PC-9 (cell line): ENCODE measurements at regions of chr7 and their contacts with region 1.

Region 1: GRCh38 chr7:29564496-29565223 is 1.0 kb downstream of the PRR15 start:
- DNase-seq: peak; percentile 96 to 98
- H3K4me3 ChIP-seq: peak overlapping the region; percentile 72
- H3K27ac ChIP-seq: peak overlapping the region; percentile 92
- H3K4me1 ChIP-seq: peaks cover 52% of the 10 kb centered on the region
- H3K27me3 ChIP-seq: no peaks in the 10 kb centered on the region
- CTCF ChIP-seq: 0 out of 2 replicates have a peak, but pooled peaks have one; percentile 17

Region 2: DNA sequence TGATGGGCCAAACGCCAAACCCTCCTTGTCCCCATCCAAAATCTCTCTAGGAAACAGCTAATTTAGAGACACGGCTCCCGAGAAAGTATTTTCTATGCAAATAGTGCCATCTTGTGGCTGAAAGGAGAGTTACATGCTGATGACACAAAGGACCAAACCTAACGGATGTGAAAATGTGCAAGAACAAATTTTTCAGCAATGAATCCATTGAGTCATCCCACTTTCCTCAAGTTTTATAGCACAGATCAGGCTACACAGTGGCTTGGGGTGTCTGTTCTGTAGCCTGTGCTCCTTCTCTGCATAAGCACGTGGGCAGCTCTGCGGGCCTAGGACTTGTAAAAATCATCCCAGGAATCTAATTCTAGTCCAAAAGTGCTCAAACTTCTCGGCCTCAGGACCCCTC is 155.8 kb before region 1 on chr7:
- CTCF ChIA-PET with region 1: no interaction called
- POLR2A ChIA-PET with region 1: no interaction called
- intact Hi-C with region 1: loop called (anchors 2 kb)
- DNase-seq: peak; percentile 55 to 77
- H3K4me3 ChIP-seq: no peak overlapping the region
- H3K27ac ChIP-seq: no peak overlapping the region
- H3K4me1 ChIP-seq: peaks cover 19% of the 10 kb centered on the region
- H3K27me3 ChIP-seq: peaks cover 4% of the 10 kb centered on the region; the same call in 1 of the 2 replicates
- CTCF ChIP-seq: peak; percentile 99

Region 3: DNA sequence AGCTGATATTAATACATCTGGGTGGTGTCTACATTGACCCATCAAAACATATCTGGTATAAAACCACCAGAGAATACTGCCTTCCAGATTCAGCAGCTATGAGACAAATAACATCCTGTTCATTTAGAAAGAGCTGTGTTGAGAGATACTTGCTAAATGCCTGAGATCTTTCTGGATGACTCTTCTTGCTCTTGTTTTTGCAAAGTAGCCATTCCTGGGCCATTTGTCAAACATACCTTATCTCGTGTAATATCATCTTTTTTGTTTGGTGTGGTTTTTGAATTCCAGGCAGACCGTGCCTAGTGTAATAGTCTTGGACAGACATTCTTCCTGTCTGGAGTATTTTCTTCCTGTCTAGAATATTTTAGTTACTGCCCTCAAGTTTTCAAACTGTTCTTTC is 75.7 kb before region 1 on chr7:
- CTCF ChIA-PET with region 1: no interaction called
- POLR2A ChIA-PET with region 1: interaction called, 20 read pairs
- intact Hi-C with region 1: loop called (anchors 1 kb)
- DNase-seq: peak; percentile 40 to 82
- H3K4me3 ChIP-seq: no peak overlapping the region
- H3K27ac ChIP-seq: peak overlapping the region; percentile 28
- H3K4me1 ChIP-seq: peaks cover 23% of the 10 kb centered on the region
- H3K27me3 ChIP-seq: no peaks in the 10 kb centered on the region
- CTCF ChIP-seq: no peak

Region 4: DNA sequence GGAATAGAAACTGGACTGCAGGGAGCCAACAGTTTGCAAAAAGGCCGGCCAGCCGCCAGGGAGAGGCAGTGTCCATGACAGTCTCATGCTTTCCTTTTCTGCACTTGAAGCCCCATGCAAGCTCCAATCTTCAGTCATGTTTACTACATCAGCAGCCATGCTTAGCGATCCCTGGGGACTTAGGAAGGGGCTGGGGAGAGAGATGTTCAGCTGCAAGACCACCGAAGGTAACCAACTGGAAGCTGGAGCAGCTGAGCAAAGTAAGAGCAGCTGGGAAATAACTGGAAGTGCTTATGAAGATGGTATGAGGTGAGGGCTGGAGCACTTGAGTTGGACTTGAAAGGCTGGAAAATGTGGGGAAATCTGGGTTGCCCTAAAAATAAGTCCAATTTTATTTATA is 36.0 kb after region 1 on chr7:
- CTCF ChIA-PET with region 1: no interaction called
- POLR2A ChIA-PET with region 1: no interaction called
- intact Hi-C with region 1: no loop called
- DNase-seq: no peak
- H3K4me3 ChIP-seq: no peak overlapping the region
- H3K27ac ChIP-seq: no peak overlapping the region
- H3K4me1 ChIP-seq: peaks cover 8% of the 10 kb centered on the region
- H3K27me3 ChIP-seq: no peaks in the 10 kb centered on the region
- CTCF ChIP-seq: no peak

Region 5: GRCh38 chr7:29684787-29685650 is 120.4 kb after region 1 on chr7:
- CTCF ChIA-PET with region 1: no interaction called
- POLR2A ChIA-PET with region 1: interaction called, 17 read pairs
- intact Hi-C with region 1: loop called (anchors 10 kb)
- DNase-seq: peak; percentile 48 to 77
- H3K4me3 ChIP-seq: peak overlapping the region; percentile 97
- H3K27ac ChIP-seq: peak overlapping the region; percentile 64
- H3K4me1 ChIP-seq: peaks cover 44% of the 10 kb centered on the region
- H3K27me3 ChIP-seq: no peaks in the 10 kb centered on the region
- CTCF ChIP-seq: no peak

Region 6: GRCh38 chr7:30026229-30027064 is 461.8 kb after region 1 on chr7 and contains the start of gene FKBP14:
- CTCF ChIA-PET with region 1: no interaction called
- POLR2A ChIA-PET with region 1: no interaction called
- intact Hi-C with region 1: loop called (anchors 1 kb)
- DNase-seq: peak; percentile 97 to 99
- H3K4me3 ChIP-seq: peak within 1 kb of the TSS; percentile 75
- H3K27ac ChIP-seq: peak within 1 kb of the TSS; percentile 66
- H3K4me1 ChIP-seq: peaks cover 43% of the 10 kb centered on the region
- H3K27me3 ChIP-seq: no peaks in the 10 kb centered on the region
- CTCF ChIP-seq: no peak
- total RNA-seq, gene FKBP14: 29.8 and 29.9 TPM in 2 replicates